ENCODE measurements at regions of chr3 and their contacts with region 1.

Region 1: GRCh38 chr3:31550452-31551251 is 17.9 kb downstream of the STT3B start:
- DNase-seq: no peak
- H3K4me3 ChIP-seq: no peak overlapping the region
- H3K27ac ChIP-seq: peak overlapping the region; percentile 16
- H3K4me1 ChIP-seq: peaks cover 80% of the 10 kb centered on the region
- H3K27me3 ChIP-seq: no peaks in the 10 kb centered on the region
- CTCF ChIP-seq: peak; percentile 73

Region 2: GRCh38 chr3:31462050-31462569 is 88.5 kb before region 1 on chr3:
- intact Hi-C with region 1: no loop called
- DNase-seq: no peak
- H3K4me3 ChIP-seq: no peak overlapping the region
- H3K27ac ChIP-seq: no peak overlapping the region
- H3K4me1 ChIP-seq: no peaks in the 10 kb centered on the region
- H3K27me3 ChIP-seq: no peaks in the 10 kb centered on the region
- CTCF ChIP-seq: no peak

Region 3: GRCh38 chr3:31768479-31769123 is 217.9 kb after region 1 on chr3:
- intact Hi-C with region 1: loop called (anchors 10 kb)
- DNase-seq: peak; percentile 28
- H3K4me3 ChIP-seq: no peak overlapping the region
- H3K27ac ChIP-seq: no peak overlapping the region
- H3K4me1 ChIP-seq: no peaks in the 10 kb centered on the region
- H3K27me3 ChIP-seq: no peaks in the 10 kb centered on the region
- CTCF ChIP-seq: peak; percentile 79